ENCODE measurements at regions of chr3 and their contacts with region 1.

Region 1: GRCh38 chr3:140467104-140467577 is 210.7 kb upstream of the TRIM42 start:
- DNase-seq: peak; percentile 50 to 93
- H3K4me3 ChIP-seq: no peak overlapping the region
- H3K27ac ChIP-seq: peak overlapping the region; percentile 92
- H3K4me1 ChIP-seq: peaks cover 33% of the 10 kb centered on the region
- H3K27me3 ChIP-seq: no peaks in the 10 kb centered on the region
- CTCF ChIP-seq: no peak

Region 2: DNA sequence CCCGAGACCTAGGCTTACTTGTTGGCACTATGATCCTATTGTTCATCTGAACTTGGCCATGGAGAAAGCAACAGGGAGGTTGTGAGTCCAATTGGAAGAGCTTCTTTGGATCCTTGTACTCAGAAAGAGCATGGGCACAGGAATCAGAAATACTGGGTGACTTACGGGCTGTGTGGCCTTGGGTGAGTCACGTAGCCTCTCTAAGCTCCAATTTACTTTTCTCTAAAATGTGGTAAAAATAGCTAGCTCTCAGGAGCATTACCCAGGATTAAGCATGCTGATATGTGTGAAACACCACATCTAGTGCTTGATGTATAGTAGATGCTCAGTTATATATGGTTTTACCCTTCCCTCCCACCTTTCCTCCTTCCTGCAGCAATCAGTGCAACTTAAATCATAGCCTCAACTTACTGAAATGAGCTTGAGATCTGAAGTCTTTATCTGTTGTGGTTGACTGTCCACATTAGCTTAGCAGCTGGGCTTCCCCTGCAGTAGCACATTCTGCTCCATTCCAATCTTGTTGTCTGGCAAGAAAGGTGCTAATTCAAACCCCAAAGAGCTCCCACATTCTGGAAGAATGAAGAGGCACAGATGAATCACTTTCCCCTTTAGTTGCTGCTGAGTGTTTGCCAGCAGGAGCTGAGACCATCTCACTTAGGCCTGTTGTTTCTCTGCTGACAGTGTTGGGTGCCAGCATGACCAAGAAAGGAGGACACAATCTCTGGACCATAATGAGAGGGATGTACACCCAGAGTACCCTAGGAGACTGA is 88.4 kb before region 1 on chr3:
- CTCF ChIA-PET with region 1: no interaction called
- POLR2A ChIA-PET with region 1: no interaction called
- intact Hi-C with region 1: no loop called
- DNase-seq: no peak
- H3K4me3 ChIP-seq: no peak overlapping the region
- H3K27ac ChIP-seq: no peak overlapping the region
- H3K4me1 ChIP-seq: no peaks in the 10 kb centered on the region
- H3K27me3 ChIP-seq: no peaks in the 10 kb centered on the region
- CTCF ChIP-seq: no peak

Region 3: DNA sequence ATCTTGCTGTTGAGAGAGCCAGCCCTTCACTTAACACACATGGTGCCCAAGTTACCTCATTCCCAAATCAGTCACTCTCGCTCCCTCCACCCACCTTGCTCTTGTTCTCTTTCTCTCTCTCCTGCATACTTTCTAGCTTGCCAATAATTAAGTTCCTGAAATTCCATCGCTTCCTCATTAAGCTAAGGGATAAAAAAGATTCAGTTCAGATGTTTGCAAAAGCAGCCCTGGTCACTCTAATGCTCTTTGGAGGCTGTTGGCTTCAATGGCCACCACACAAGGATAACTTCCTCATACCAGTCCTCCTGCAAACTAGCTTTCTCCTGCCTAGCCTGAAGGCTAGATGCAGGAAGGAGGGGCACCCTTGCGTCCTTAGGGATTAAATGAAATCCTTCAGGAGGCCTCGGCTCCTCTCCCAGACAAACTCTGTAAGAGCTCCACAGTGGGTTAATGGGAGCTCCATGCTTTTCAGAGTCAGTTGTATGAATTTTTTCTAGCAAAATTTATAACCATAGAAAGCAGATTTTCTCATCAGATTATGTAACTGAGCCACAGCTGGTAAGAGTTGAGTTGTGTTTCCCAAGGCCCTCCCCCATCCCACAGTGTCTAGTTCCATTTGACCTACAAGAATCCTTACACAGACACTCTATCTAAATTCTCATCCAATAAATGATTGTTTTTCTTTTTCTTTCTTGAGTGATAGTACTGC is 34.1 kb after region 1 on chr3:
- CTCF ChIA-PET with region 1: no interaction called
- POLR2A ChIA-PET with region 1: no interaction called
- intact Hi-C with region 1: loop called (anchors 1 kb)
- DNase-seq: peak; percentile 62 to 82
- H3K4me3 ChIP-seq: no peak overlapping the region
- H3K27ac ChIP-seq: peak overlapping the region; percentile 41
- H3K4me1 ChIP-seq: peaks cover 19% of the 10 kb centered on the region
- H3K27me3 ChIP-seq: no peaks in the 10 kb centered on the region
- CTCF ChIP-seq: no peak

Region 4: DNA sequence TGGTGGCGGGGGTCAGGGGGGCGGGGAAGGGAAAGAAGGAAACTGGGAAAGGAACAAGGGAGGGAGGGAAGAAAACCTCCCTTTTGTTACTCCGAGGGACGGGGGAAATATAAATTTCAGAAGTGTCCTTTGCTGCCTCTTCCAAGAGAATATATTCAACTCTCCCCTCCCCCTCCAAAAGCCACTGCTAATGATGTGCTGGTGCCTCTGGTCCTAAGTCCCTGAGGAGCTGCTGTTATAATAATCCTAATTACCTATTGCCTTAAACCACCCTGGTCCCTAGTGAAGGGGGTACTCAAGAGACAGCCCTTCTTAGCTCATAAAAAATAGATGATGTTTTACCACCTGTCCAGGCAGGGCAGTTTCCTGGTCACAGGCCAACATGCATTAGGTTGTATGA is 92.4 kb after region 1 on chr3:
- CTCF ChIA-PET with region 1: no interaction called
- POLR2A ChIA-PET with region 1: no interaction called
- intact Hi-C with region 1: no loop called
- DNase-seq: no peak
- H3K4me3 ChIP-seq: no peak overlapping the region
- H3K27ac ChIP-seq: no peak overlapping the region
- H3K4me1 ChIP-seq: no peaks in the 10 kb centered on the region
- H3K27me3 ChIP-seq: no peaks in the 10 kb centered on the region
- CTCF ChIP-seq: no peak